ENCODE measurements at regions of chr6 and their contacts with region 1.

Region 1: DNA sequence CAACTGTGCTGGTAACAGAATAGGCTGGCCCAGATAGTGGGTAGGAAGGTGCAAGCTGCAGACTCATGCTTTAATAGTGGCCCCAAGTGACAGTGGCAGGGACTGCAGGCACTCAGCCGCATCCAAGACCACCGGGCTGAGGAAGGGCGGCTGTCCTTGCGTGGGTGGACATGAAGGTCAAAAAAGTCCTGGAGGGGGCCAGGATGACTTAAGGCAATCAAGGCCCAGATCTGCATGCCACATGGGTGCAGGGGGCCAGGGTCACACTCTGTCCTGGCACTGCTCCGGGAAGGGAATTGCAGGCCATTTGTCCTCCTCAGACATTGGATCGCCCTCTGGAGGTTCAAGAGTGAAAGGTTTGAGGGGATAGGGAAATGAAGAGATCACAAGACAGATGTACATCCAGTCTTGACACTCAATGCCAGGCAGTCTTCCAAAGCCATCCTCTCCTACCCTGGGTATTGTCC is 10.4 kb upstream of the VNN2 start:
- DNase-seq: peak; percentile 33
- ATAC-seq: peak; percentile 79
- H3K4me3 Mint-ChIP-seq: peak overlapping the region; percentile 47
- H3K27ac Mint-ChIP-seq: no peak overlapping the region
- H3K4me1 Mint-ChIP-seq: peaks cover 18% of the 10 kb centered on the region
- H3K27me3 Mint-ChIP-seq: no peaks in the 10 kb centered on the region
- CTCF ChIP-seq: peak; percentile 30

Region 2: DNA sequence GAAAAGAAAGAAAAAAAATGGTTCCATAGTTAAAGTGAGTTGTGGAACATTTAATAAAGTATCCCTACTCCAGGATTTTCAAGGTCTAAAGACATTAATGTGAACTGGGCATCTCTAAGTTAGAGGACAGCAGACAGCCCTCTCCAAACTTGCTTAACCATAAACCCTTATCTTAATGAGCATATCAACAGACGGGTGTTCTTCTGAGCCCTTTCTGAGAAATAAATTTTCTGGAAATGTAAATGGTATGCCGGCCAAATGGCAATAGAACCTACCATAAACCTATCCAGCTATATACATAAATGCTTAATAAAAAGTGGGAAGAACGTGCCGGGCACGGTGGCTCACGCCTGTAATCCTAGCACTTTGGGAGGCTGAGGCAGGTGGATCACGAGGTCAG is 17.9 kb after region 1 on chr6:
- CTCF ChIA-PET with region 1: interaction called, 4 read pairs
- POLR2A ChIA-PET with region 1: no interaction called
- intact Hi-C with region 1: loop called (anchors 2 kb)
- DNase-seq: no peak
- ATAC-seq: no peak
- H3K4me3 Mint-ChIP-seq: no peak overlapping the region
- H3K27ac Mint-ChIP-seq: no peak overlapping the region
- H3K4me1 Mint-ChIP-seq: peaks cover 3% of the 10 kb centered on the region
- H3K27me3 Mint-ChIP-seq: no peaks in the 10 kb centered on the region
- CTCF ChIP-seq: no peak

Region 3: DNA sequence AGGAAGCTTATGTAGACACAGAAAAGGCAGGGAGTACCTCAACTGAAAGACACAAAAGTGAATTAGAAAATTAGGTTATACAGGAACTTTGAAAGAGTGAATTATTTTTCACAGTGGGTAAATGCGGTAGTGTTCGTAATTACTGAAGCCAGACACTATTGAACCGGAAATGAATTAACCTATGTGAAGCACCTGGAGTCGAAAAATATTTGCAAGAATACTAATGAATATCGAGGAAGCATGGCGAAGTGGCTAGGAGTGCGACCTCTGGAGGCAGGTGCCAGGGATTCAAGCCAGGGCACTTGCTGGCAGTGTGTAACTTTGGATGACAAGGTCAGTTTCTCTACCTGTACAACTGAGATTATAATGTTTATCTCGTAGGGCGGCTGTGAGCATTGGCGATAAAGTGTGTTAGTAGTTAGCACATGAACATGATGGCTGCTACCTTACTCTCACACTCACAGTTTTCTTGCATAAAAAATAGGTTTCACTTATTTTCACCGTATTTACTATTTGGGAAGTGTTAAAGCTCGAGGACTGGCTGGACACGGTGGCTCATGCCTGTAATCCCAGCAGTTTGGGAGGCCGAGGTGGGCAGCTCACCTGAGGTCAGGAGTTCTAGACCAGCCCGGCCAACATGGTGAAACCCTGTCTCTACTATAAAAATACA is 30.9 kb after region 1 on chr6:
- CTCF ChIA-PET with region 1: interaction called, 7 read pairs
- POLR2A ChIA-PET with region 1: interaction called, 11 read pairs
- intact Hi-C with region 1: loop called (anchors 2 kb)
- DNase-seq: peak; percentile 52
- ATAC-seq: peak; percentile 76
- H3K4me3 Mint-ChIP-seq: no peak overlapping the region
- H3K27ac Mint-ChIP-seq: no peak overlapping the region
- H3K4me1 Mint-ChIP-seq: peaks cover 14% of the 10 kb centered on the region
- H3K27me3 Mint-ChIP-seq: no peaks in the 10 kb centered on the region
- CTCF ChIP-seq: no peak